Mammary epithelial cell (primary cell): ENCODE measurements at regions of chr12 and their contacts with region 1.

Region 1: DNA sequence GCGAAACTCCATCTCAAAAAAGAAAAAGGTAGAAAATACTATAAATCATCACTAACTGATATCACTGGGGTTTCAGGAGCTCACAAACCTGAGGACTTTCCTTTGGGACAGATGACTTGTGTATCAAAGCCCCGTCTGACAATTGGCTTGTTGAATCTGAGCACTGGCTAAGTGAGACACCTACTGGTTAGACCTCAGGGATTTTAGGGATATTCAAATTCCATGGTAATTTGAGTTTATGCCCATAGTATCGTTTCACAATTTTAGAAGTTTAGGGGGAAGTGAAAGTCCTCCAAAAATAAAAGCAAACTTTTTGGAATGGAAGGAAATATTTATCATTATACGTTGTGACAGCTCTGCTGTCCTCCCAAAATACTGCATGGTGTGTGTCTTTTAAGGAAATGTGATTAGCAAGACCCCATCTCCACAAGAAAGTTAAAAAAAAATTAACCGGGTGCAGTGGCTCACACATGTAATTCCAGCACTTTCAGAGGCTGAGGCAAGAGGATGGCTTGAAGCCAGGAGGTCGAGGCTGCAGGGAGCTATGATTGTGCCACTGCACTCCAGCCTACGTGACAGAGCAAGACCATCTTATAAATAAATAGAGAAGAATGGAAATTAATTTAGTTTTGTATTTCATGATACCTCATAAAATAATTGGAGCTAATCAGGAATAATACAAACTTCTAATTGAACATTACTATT is 49.2 kb downstream of the FBXL14 start:
- DNase-seq: no peak
- H3K4me3 ChIP-seq: no peak overlapping the region
- H3K27ac ChIP-seq: no peak overlapping the region
- H3K4me1 ChIP-seq: peaks cover 18% of the 10 kb centered on the region
- H3K27me3 ChIP-seq: no peaks in the 10 kb centered on the region
- CTCF ChIP-seq: peak; percentile 17 to 42

Region 2: DNA sequence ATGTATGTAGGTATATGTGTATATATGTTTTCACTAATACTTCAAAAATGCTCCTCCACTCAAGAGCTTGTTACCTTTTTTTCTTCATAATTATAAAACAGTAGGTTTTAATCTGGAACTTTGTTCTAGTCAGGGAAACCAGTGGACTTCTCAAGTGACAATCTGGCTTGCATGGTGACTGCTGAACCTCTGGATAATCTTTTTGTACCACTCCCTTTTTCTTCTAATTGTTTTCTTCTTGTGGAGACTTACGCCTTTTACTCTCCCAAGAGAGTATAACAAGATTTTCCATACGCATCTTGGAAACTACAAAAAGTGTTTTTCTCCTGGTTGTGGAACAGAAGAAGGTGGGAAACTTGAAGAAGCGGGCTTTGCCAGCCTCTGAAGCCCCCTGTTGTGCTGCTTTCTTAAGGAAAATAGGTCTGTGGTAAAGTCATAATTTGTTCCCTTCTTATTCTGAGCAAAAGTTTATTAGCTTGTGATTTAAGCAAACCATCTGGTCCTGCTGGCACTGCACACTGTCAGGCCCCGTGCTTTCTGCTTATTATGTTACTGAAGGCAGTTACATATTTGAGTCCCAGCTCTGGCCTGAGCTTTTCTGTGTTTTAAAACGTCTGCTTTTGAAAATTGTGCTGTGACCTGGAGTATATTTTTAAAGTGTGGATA is 262.3 kb before region 1 on chr12:
- CTCF ChIA-PET with region 1: no interaction called
- dilution Hi-C with region 1: no loop called
- in situ Hi-C with region 1: no loop called
- intact Hi-C with region 1: loop called (anchors 10 kb)
- DNase-seq: no peak
- H3K4me3 ChIP-seq: no peak overlapping the region
- H3K27ac ChIP-seq: no peak overlapping the region
- H3K4me1 ChIP-seq: no peaks in the 10 kb centered on the region
- H3K27me3 ChIP-seq: no peaks in the 10 kb centered on the region
- CTCF ChIP-seq: no peak

Region 3: DNA sequence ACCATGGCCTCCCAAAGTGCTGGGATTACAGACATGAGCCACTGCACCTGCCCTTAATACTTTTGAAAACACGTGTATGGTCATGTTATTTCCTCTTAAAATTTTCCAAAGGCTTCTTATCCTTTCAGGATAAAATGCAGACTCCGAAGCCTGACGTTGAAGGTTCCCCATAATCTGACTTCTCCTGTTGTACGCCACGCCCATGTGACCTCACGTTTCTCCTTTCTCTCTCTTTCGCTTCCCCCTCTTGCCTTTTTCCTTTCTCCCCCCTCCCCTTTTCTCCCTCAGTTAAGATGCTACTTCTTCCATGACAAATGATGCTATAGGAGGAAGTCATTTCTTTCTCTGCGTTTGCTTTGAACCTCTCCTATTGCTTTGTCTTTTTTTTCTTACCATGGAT is 216.8 kb before region 1 on chr12:
- CTCF ChIA-PET with region 1: no interaction called
- dilution Hi-C with region 1: no loop called
- in situ Hi-C with region 1: no loop called
- intact Hi-C with region 1: no loop called
- DNase-seq: no peak
- H3K4me3 ChIP-seq: no peak overlapping the region
- H3K27ac ChIP-seq: no peak overlapping the region
- H3K4me1 ChIP-seq: peaks cover 6% of the 10 kb centered on the region
- H3K27me3 ChIP-seq: no peaks in the 10 kb centered on the region
- CTCF ChIP-seq: no peak

Region 4: GRCh38 chr12:1398673-1399072 is 146.5 kb before region 1 on chr12:
- CTCF ChIA-PET with region 1: no interaction called
- dilution Hi-C with region 1: no loop called
- in situ Hi-C with region 1: no loop called
- intact Hi-C with region 1: loop called (anchors 10 kb)
- DNase-seq: no peak
- H3K4me3 ChIP-seq: no peak overlapping the region
- H3K27ac ChIP-seq: no peak overlapping the region
- H3K4me1 ChIP-seq: no peaks in the 10 kb centered on the region
- H3K27me3 ChIP-seq: no peaks in the 10 kb centered on the region
- CTCF ChIP-seq: peak in 1 of 2 donors; percentile 26

Region 5: DNA sequence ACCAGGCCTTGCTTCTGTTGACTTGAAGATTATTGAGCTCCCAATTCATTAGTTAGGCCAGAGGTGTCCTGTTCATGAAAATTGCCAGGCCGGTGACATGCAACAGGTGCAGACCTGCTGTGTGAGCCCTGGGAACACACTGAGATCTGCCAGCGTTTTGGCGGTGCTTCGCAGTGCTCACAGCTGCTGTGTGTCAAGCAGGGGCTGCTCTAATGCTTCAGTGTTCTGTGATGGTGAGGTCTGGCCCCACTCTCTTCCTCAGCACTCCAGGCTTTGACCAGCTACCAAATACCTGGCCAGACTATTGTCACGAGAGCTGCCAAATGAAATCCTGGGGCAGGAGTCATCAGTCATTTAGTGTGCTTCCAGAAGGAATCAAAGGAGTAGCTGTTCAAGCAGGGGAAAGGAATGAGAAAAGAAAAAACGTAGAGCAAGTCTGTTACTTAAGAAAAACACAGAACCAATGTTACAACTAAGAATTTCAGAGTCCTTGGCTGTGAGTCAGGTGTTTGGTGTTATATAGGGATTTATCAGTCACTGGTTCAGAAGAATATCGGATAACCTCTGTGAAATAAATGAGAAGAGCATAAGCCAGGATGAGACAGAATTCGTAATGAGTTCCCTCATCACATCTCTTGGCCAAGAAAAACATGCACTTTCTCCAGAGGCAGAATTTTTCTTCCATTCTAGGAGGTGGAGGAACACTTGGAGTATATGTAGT is 101.6 kb before region 1 on chr12:
- CTCF ChIA-PET with region 1: no interaction called
- dilution Hi-C with region 1: no loop called
- in situ Hi-C with region 1: no loop called
- intact Hi-C with region 1: loop called (anchors 2 kb)
- DNase-seq: peak; percentile 78
- H3K4me3 ChIP-seq: peak overlapping the region; percentile 16 to 31 (median 22)
- H3K27ac ChIP-seq: peak overlapping the region; percentile 55
- H3K4me1 ChIP-seq: peaks cover 23% of the 10 kb centered on the region
- H3K27me3 ChIP-seq: no peaks in the 10 kb centered on the region
- CTCF ChIP-seq: no peak

Region 6: DNA sequence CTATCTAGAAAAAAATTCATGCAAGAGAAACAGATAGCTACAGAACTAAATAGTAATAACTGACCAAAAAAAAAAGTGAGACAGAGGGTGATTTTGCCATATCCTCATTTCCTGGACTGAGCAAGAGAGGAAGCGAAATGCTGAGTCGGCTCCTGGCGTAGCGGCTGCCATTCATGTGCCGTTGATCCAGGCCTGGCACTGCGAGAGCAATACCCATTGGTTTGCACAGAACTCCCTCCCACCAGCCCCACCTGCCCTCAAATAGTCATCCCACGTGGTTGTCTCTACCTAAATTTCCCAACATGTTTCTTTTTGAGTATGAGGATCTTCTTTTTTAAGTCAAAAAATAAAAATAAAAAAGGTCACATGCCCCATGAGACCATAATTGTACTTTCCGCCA is 74.4 kb after region 1 on chr12:
- CTCF ChIA-PET with region 1: no interaction called
- dilution Hi-C with region 1: no loop called
- in situ Hi-C with region 1: no loop called
- intact Hi-C with region 1: no loop called
- DNase-seq: no peak
- H3K4me3 ChIP-seq: no peak overlapping the region
- H3K27ac ChIP-seq: no peak overlapping the region
- H3K4me1 ChIP-seq: peaks cover 16% of the 10 kb centered on the region
- H3K27me3 ChIP-seq: no peaks in the 10 kb centered on the region
- CTCF ChIP-seq: no peak